BJ (cell line): ENCODE measurements at regions of chr1 and their contacts with region 1.

Region 1: DNA sequence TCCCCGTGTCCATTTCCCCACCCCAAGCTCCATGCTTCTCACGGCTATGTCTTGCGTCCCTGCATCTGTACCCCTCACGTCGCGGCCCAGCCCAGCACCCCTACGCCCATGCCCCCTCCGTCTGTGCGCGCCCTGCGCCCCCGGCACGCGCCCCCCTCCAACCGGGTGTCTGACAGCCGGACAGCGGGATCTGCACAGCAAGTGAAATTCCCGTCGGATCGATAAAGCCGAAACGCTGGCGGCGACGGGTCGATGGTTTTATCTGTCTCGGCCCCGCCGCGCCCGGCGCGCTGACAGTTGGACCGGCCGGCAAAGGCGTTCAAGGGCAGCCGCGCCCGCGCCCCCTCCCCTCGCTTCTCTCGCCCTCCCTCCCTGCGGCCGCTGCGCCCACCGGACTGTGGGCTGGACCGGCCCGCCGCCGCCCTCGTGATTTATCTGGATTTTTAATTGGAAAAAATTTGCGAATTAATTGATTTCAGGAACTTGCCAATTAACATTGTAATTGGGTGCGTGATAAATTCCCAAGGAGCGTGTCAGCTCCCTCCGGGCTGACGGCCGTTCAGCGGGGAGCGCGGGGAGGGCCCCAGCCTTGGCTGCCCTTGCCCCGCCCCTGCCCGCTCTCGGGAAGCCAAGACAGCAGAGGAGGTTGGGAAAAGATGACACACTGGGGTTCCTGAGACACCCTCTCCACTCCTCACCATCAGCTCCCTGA is 57.1 kb downstream of the TMEM53 start:
- DNase-seq: no peak
- H3K4me3 ChIP-seq: peak overlapping the region; percentile 38
- H3K27me3 ChIP-seq: no peaks in the 10 kb centered on the region
- CTCF ChIP-seq: no peak

Region 2: DNA sequence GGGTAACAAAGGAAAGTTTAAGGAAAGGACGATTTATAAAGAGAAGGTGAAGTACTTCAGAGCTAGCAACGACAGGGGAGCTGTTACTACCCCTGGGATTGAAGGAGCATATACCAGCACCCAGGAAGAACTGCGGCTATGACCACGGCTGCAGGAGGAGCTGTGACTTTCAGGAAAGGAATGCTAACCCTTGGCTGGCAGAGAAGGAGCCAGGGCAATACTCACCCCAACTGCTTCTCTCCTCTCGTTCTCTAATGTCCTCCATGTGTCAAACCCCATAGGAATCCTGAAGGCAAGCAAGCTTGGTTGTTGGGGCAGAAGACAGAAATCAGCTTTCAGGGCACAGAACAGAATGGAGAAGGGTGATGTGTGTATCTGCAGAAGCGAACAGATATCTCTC is 63.4 kb before region 1 on chr1:
- CTCF ChIA-PET with region 1: no interaction called
- POLR2A ChIA-PET with region 1: no interaction called
- DNase-seq: no peak
- H3K4me3 ChIP-seq: no peak overlapping the region
- H3K27me3 ChIP-seq: peaks cover 9% of the 10 kb centered on the region
- CTCF ChIP-seq: no peak

Region 3: GRCh38 chr1:44602634-44603628 is 14.2 kb before region 1 on chr1:
- CTCF ChIA-PET with region 1: no interaction called
- POLR2A ChIA-PET with region 1: no interaction called
- DNase-seq: no peak
- H3K4me3 ChIP-seq: no peak overlapping the region
- H3K27me3 ChIP-seq: peaks cover 18% of the 10 kb centered on the region
- CTCF ChIP-seq: no peak

Region 4: DNA sequence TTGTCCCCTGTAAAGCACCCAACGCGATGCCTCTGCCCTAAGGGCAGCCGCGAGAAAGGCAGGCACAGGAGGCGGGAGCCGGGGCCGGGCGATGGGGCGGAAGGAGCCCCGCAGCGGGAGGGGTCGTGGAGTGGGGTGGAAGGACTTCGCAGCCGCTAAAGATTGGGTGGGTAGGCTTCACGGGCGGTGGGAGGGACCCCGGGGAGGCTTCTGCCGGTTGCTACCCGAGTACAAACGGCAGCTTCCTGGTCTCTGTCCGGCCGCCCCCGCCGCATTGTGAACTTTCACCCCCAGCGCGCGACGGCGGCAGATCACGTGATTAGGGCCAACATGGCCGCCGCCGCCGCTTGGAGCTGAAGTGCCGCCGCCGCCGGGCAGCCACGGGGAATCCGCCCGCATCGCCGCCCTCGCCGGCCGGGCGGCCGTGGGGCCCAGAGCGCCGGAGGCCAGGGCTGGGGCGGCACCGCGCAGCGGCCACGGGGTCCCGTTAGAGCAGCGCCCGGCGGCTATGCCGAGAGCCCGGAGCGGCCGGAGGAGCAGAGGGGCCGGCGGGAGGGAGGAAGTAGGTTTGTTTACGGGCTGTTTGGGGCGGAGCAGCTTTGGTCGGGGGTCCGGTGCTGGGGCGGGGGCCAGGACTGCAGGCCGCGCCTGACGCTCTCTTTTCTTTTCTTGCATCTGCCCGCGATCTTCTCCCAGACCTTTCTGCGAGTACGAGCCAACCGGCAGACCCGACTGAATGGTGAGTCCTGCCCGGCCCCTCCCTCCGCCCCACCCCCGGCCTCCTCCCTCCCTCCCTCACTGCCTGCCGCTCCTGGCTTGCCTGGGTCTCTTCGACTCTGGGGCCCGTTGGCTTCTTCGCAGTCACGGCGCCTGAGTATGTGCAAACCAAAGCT is 14.7 kb after region 1 on chr1:
- CTCF ChIA-PET with region 1: interaction called, 91 read pairs
- POLR2A ChIA-PET with region 1: interaction called, 6 read pairs
- DNase-seq: no peak
- H3K4me3 ChIP-seq: peak overlapping the region; percentile 67
- H3K27me3 ChIP-seq: no peaks in the 10 kb centered on the region
- CTCF ChIP-seq: no peak

Region 5: GRCh38 chr1:44636688-44637598 is 19.8 kb after region 1 on chr1:
- CTCF ChIA-PET with region 1: interaction called, 91 read pairs
- POLR2A ChIA-PET with region 1: interaction called, 6 read pairs
- DNase-seq: no peak
- H3K4me3 ChIP-seq: no peak overlapping the region
- H3K27me3 ChIP-seq: no peaks in the 10 kb centered on the region
- CTCF ChIP-seq: no peak